Posterior cingulate gyrus (tissue), 11 donors: ENCODE measurements at regions of chr11 and their contacts with region 1.

Region 1: GRCh38 chr11:124763156-124763947 is 1.3 kb upstream of the ESAM start:
- DNase-seq: peak; percentile 58 to 96 (median 81)

Region 2: GRCh38 chr11:123995119-123995518 is 768.2 kb before region 1 on chr11 and contains the start of gene OR10G6:
- intact Hi-C with region 1: no loop called
- DNase-seq: no peak

Region 3: DNA sequence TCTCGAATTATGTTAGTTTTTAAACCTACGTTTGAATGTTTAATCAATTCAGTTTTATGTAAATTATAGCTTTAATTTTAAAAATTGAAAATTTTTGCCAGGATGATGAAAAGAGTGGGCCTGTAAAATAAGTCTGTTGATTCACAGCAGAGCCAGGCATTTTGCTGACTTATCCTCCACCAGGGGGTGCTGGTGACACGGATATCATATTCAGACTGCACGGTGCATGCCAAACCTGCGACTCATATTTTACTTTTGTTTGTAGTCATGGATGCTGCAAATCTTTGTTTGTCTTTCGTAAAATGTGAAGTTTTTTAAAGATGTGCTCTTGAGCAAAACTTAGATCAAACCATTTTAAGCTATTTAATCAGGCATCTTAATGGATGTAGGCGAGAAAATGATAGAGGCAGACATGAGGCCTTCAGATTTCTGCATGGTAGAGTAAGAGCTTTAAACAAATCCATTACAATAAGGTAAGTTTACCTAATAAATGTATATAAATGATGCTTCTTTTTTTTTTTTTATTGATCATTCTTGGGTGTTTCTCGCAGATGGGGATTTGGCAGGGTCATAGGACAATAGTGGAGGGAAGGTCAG is 360.9 kb before region 1 on chr11:
- intact Hi-C with region 1: loop called (anchors 10 kb)
- DNase-seq: peak; percentile 19 to 92 (median 69)

Region 4: GRCh38 chr11:124551189-124551588 is 212.2 kb before region 1 on chr11:
- intact Hi-C with region 1: no loop called
- DNase-seq: no peak

Region 5: DNA sequence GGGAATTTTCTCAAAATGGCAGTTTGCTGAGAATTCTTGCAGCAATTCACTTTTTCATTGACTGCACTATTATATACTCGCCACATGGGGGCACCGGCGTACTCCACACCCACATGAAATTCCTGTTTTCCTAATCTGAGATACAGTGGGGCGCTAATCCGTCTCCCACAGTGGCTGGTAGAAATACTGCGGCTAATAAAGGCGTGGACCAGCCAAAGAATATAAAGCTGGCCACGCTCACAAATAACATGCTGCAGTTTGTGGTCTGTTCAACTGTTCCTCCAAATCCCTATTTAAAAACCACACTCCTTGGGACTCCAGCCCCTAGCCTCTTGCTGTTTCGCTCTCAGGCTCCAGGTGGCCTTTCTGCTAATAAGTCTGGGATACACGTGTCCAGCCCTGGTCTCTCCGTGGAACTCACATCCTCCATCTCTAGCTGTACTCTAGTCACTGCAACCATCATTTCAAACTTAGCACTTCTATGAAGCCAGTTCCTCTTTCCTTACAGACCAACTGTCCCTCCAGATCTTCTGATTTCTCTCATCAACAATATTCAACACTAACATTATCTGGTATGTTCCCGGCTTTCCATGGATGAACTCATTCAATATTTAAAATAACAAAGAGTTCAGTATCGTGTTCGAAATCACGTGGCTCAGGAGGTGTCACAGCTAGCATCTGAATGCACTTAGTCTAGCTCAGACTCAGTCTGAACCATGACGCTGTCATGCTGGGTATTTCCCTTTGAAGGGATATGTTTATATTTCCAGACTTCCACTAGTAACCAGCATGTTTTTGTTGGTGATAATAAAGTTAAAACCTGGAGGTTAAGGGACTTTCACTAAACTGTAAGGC is 118.7 kb before region 1 on chr11:
- intact Hi-C with region 1: loop called (anchors 1 kb)
- DNase-seq: peak; percentile 34 to 94 (median 56)

Region 6: DNA sequence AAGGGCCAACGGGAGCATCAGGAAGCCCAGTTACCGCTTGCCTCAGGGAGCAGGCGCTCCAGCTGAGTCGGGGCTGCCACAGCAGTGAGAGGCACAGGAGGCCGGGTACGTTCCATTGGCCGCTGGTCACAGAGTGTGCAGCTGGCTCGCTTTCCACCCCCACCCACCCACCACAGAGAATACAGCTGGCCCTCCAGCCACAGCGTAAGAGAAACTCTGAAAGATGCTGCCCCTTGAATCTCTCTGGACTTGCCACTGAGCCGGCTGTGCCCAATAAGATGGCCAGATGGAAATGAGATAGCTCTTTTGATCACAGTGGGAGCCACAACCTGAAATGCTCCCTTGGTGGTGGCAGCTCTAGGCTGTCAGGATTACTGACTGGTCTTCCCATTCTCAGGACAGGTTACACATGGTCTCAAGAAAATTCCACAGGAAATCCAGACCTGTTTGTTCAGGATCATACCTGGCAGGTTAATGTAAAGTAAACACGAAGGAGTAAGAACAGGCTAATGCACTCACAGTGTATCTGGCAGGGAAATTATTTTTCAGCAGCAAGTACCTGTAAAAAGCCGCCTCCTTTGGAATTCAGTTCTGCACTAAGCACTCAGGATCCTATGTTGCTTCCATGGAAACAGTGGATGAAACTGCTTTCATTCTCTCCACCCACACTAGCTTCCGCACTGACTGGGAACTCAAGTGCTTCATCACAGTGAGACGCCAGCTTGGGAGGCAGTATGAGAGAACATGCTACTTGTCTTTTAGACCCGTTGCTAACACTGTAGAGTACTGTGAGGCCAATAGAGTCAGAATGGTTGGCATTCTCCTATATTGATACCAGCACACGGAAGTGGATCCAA is 106.3 kb before region 1 on chr11:
- intact Hi-C with region 1: no loop called
- DNase-seq: peak in 6 of 10 donors; percentile 44 to 86 (median 71)

Region 7: GRCh38 chr11:124673333-124674167 is 89.8 kb before region 1 on chr11 and contains the starts of genes SIAE and SPA17:
- intact Hi-C with region 1: loop called (anchors 1 kb)
- DNase-seq: peak; percentile 72 to 98 (median 90)

Region 8: DNA sequence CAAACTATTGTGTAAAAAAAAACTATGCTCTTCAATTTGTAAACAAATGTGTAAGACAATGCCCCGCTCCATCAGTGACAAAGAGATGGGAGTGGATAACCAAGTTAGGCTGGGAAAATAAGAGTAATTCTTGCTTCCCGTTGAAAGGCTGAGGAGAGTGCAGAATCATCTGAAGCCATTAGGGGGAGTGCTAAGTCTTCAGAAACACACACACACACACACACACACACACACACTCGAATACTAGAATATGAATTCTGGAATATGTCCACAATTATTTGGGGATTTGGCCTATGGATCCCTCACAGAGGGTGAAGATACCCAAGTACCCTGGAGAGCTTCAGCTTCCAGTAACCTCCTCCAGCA is 74.1 kb after region 1 on chr11:
- intact Hi-C with region 1: loop called (anchors 5 kb)
- DNase-seq: no peak

Region 9: GRCh38 chr11:124855437-124855836 is 92.1 kb after region 1 on chr11:
- intact Hi-C with region 1: no loop called
- DNase-seq: no peak